ENCODE measurements at regions of chr3 and their contacts with region 1.

Region 1: GRCh38 chr3:88019024-88019423 is 39.8 kb downstream of the CGGBP1 start:
- DNase-seq: no peak
- ATAC-seq: no peak
- H3K4me3 ChIP-seq: no peak overlapping the region
- H3K27ac ChIP-seq: no peak overlapping the region
- H3K4me1 ChIP-seq: no peaks in the 10 kb centered on the region
- H3K27me3 ChIP-seq: no peaks in the 10 kb centered on the region
- CTCF ChIP-seq: no peak
- POLR2A ChIP-seq: no peak
- RAD21 ChIP-seq: no peak

Region 2: GRCh38 chr3:87307803-87308202 is 711.2 kb before region 1 on chr3:
- CTCF ChIA-PET with region 1: no interaction called
- POLR2A ChIA-PET with region 1: no interaction called
- dilution Hi-C with region 1: no loop called
- in situ Hi-C with region 1: loop called (anchors 10 kb)
- intact Hi-C with region 1: no loop called
- DNase-seq: no peak
- ATAC-seq: no peak
- H3K4me3 ChIP-seq: no peak overlapping the region
- H3K27ac ChIP-seq: no peak overlapping the region
- H3K4me1 ChIP-seq: no peaks in the 10 kb centered on the region
- H3K27me3 ChIP-seq: peaks cover 2% of the 10 kb centered on the region; the same call in 1 of the 2 replicates
- CTCF ChIP-seq: peak; percentile 26
- POLR2A ChIP-seq: no peak
- RAD21 ChIP-seq: no peak

Region 3: GRCh38 chr3:88141458-88142083 is 122.5 kb after region 1 on chr3:
- CTCF ChIA-PET with region 1: no interaction called
- POLR2A ChIA-PET with region 1: no interaction called
- dilution Hi-C with region 1: no loop called
- in situ Hi-C with region 1: no loop called
- intact Hi-C with region 1: no loop called
- DNase-seq: peak; percentile 77
- ATAC-seq: peak; percentile 59
- H3K4me3 ChIP-seq: no peak overlapping the region
- H3K27ac ChIP-seq: no peak overlapping the region
- H3K4me1 ChIP-seq: no peaks in the 10 kb centered on the region
- H3K27me3 ChIP-seq: no peaks in the 10 kb centered on the region
- CTCF ChIP-seq: no peak
- POLR2A ChIP-seq: no peak
- RAD21 ChIP-seq: no peak

Measured in IMR-90 (cell line).